ENCODE measurements at regions of chr7 and their contacts with region 1.

Region 1: GRCh38 chr7:27196287-27196767 is 3.6 kb downstream of the HOXA13 start:
- DNase-seq: peak; percentile 58 to 77 (median 74)
- H3K4me3 ChIP-seq: no peak overlapping the region
- H3K4me3 Mint-ChIP-seq: peak overlapping the region in 1 of 2 donors; percentile 84
- H3K27ac ChIP-seq: no peak overlapping the region
- H3K27ac Mint-ChIP-seq: no peak overlapping the region
- H3K4me1 ChIP-seq: peaks cover 38 to 47% of the 10 kb centered on the region in 2 donors
- H3K4me1 Mint-ChIP-seq: peaks cover 51% of the 10 kb centered on the region
- H3K27me3 ChIP-seq: peaks cover 86 to 92% of the 10 kb centered on the region in 2 donors
- H3K27me3 Mint-ChIP-seq: peaks cover 84 to 91% (median 87%) of the 10 kb centered on the region in 3 donors
- CTCF ChIP-seq: peak; percentile 96

Region 2: DNA sequence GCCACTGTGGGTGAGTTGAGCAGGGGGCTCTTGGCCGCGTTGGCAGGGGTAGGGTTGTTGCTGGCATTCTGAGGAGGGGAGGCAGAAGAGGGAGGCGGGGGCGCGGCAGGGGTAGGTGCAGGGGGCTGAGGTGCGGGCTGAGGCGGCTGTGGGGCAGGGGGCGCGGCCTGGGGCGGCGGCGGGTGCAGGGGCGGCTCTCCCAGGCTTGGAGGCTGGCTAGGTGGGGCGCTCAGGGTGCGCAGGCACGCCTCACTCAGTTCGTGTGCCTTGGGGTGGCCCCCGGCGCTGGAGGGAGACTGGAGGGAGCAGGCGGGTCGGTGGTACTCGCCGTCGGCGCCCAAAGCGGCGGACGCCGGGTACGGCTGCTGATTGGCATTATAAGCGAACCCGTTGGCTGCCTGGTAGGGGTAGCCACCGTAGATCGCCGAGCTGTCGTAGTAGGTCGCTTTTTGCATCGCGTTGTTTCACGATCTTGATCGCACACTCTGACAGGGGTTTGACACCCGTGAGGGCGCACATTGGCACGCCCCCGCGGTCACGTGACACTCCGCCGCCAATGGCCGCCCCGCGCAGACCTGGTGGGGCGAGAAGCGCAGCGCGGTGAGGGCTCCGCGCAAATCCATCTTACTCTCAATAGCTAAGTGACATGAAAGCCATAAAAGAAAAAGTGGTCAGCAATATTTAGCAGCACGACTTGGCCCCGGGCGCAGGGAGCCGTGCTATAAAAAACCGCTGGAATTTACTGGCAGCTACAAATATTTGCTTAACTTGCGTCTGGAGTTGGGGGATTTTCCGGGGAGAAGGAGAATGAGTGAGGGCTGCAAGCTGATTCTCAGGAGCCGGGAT is 85.9 kb before region 1 on chr7:
- intact Hi-C with region 1: no loop called
- DNase-seq: no peak
- H3K4me3 ChIP-seq: no peak overlapping the region
- H3K4me3 Mint-ChIP-seq: no peak overlapping the region
- H3K27ac ChIP-seq: no peak overlapping the region
- H3K27ac Mint-ChIP-seq: peak overlapping the region in 1 of 7 donors; percentile 30
- H3K4me1 ChIP-seq: no peaks in the 10 kb centered on the region
- H3K4me1 Mint-ChIP-seq: no peaks in the 10 kb centered on the region
- H3K27me3 ChIP-seq: peaks cover 2 to 10% of the 10 kb centered on the region in 2 donors
- H3K27me3 Mint-ChIP-seq: peaks cover 9 to 14% (median 10%) of the 10 kb centered on the region in 3 donors
- CTCF ChIP-seq: no peak

Region 3: GRCh38 chr7:27160546-27161213 is 35.6 kb before region 1 on chr7:
- intact Hi-C with region 1: loop called in 1 of 2 experiments (anchors 5 kb)
- DNase-seq: peak; percentile 70 to 84 (median 78)
- H3K4me3 ChIP-seq: peak overlapping the region; percentile 53 to 94 (median 79)
- H3K4me3 Mint-ChIP-seq: peak overlapping the region; percentile 86
- H3K27ac ChIP-seq: peak overlapping the region in 1 of 2 donors; percentile 52
- H3K27ac Mint-ChIP-seq: peak overlapping the region in 5 of 7 donors; percentile 14 to 80 (median 30)
- H3K4me1 ChIP-seq: peaks cover 60 to 77% of the 10 kb centered on the region in 2 donors
- H3K4me1 Mint-ChIP-seq: peaks cover 67% of the 10 kb centered on the region
- H3K27me3 ChIP-seq: peaks cover 61 to 92% of the 10 kb centered on the region in 2 donors
- H3K27me3 Mint-ChIP-seq: peaks cover 84 to 93% (median 85%) of the 10 kb centered on the region in 3 donors
- CTCF ChIP-seq: peak; percentile 100

Region 4: GRCh38 chr7:27277619-27278018 is 81.3 kb after region 1 on chr7:
- intact Hi-C with region 1: no loop called
- DNase-seq: no peak
- H3K4me3 ChIP-seq: no peak overlapping the region
- H3K4me3 Mint-ChIP-seq: peak overlapping the region in 1 of 2 donors; percentile 15
- H3K27ac ChIP-seq: no peak overlapping the region
- H3K27ac Mint-ChIP-seq: no peak overlapping the region
- H3K4me1 ChIP-seq: no peaks in the 10 kb centered on the region
- H3K4me1 Mint-ChIP-seq: no peaks in the 10 kb centered on the region
- H3K27me3 ChIP-seq: peaks cover 0 to 4% of the 10 kb centered on the region in 2 donors
- H3K27me3 Mint-ChIP-seq: peaks cover 4 to 10% (median 8%) of the 10 kb centered on the region in 3 donors
- CTCF ChIP-seq: no peak

Region 5: DNA sequence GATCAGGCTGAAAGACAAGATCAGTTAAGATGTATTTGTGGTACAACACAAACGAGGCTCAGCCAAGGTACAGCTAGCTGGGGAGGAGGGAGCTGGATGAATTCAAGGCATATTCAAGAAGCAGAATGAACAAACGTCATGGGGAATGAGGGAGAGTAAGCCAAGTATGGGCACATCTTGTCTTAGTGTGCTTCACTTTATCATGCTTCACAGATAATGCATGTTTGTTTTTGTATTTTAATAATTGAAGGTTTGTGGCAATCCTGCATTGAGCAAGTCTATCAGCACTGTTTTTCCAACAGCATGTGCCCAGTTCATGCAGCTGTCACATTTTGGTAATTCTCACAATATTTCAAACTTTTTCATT is 331.0 kb after region 1 on chr7:
- intact Hi-C with region 1: no loop called
- DNase-seq: no peak
- H3K4me3 ChIP-seq: no peak overlapping the region
- H3K4me3 Mint-ChIP-seq: no peak overlapping the region
- H3K27ac ChIP-seq: no peak overlapping the region
- H3K27ac Mint-ChIP-seq: no peak overlapping the region
- H3K4me1 ChIP-seq: no peaks in the 10 kb centered on the region
- H3K4me1 Mint-ChIP-seq: no peaks in the 10 kb centered on the region
- H3K27me3 ChIP-seq: no peaks in the 10 kb centered on the region
- H3K27me3 Mint-ChIP-seq: peaks cover 0 to 3% (median 2%) of the 10 kb centered on the region in 3 donors
- CTCF ChIP-seq: no peak

Region 6: GRCh38 chr7:27576360-27576944 is 380.1 kb after region 1 on chr7:
- intact Hi-C with region 1: loop called in 1 of 2 experiments (anchors 5 kb)
- DNase-seq: peak; percentile 16 to 56 (median 19)
- H3K4me3 ChIP-seq: no peak overlapping the region
- H3K4me3 Mint-ChIP-seq: no peak overlapping the region
- H3K27ac ChIP-seq: no peak overlapping the region
- H3K27ac Mint-ChIP-seq: no peak overlapping the region
- H3K4me1 ChIP-seq: peaks cover 0 to 3% of the 10 kb centered on the region in 2 donors
- H3K4me1 Mint-ChIP-seq: peaks cover 14% of the 10 kb centered on the region
- H3K27me3 ChIP-seq: no peaks in the 10 kb centered on the region
- H3K27me3 Mint-ChIP-seq: peaks cover 0 to 2% (median 1%) of the 10 kb centered on the region in 3 donors
- CTCF ChIP-seq: peak; percentile 73

Region 7: GRCh38 chr7:27921081-27921836 is 724.9 kb after region 1 on chr7:
- intact Hi-C with region 1: loop called in 1 of 2 experiments (anchors 10 kb)
- DNase-seq: peak; percentile 35 to 52 (median 46)
- H3K4me3 ChIP-seq: no peak overlapping the region
- H3K4me3 Mint-ChIP-seq: no peak overlapping the region
- H3K27ac ChIP-seq: no peak overlapping the region
- H3K27ac Mint-ChIP-seq: no peak overlapping the region
- H3K4me1 ChIP-seq: no peaks in the 10 kb centered on the region
- H3K4me1 Mint-ChIP-seq: peaks cover 8% of the 10 kb centered on the region
- H3K27me3 ChIP-seq: no peaks in the 10 kb centered on the region
- H3K27me3 Mint-ChIP-seq: peaks cover 0 to 2% (median 1%) of the 10 kb centered on the region in 3 donors
- CTCF ChIP-seq: peak; percentile 61

Region 8: GRCh38 chr7:28096713-28097112 is 900.4 kb after region 1 on chr7:
- intact Hi-C with region 1: loop called in 1 of 2 experiments (anchors 10 kb)
- DNase-seq: peak; percentile 47 to 67 (median 67)
- H3K4me3 ChIP-seq: no peak overlapping the region
- H3K4me3 Mint-ChIP-seq: no peak overlapping the region
- H3K27ac ChIP-seq: no peak overlapping the region
- H3K27ac Mint-ChIP-seq: no peak overlapping the region
- H3K4me1 ChIP-seq: peaks cover 15 to 28% of the 10 kb centered on the region in 2 donors
- H3K4me1 Mint-ChIP-seq: peaks cover 29% of the 10 kb centered on the region
- H3K27me3 ChIP-seq: no peaks in the 10 kb centered on the region
- H3K27me3 Mint-ChIP-seq: peaks cover 0 to 4% (median 1%) of the 10 kb centered on the region in 3 donors
- CTCF ChIP-seq: peak; percentile 89

Measured in CD14-positive monocyte (primary cell).